Ovary (tissue), 10 donors: ENCODE measurements at regions of chr2 and their contacts with region 1.

Region 1: GRCh38 chr2:6917071-6917760 is at the start of gene RNF144A:
- DNase-seq: peak; percentile 62 to 85 (median 75)
- H3K4me3 ChIP-seq: peak within 1 kb of the TSS; percentile 55
- H3K27ac ChIP-seq: peak within 1 kb of the TSS; percentile 16 to 61
- H3K4me1 ChIP-seq: peaks cover 14% of the 10 kb centered on the region
- H3K27me3 ChIP-seq: no peaks in the 10 kb centered on the region
- CTCF ChIP-seq: peak in 2 of 3 donors; percentile 54
- EP300 ChIP-seq: no peak
- POLR2A ChIP-seq: peak; percentile 25
- total RNA-seq, gene RNF144A: 19.1 to 47.7 (median 25.3) TPM

Region 2: DNA sequence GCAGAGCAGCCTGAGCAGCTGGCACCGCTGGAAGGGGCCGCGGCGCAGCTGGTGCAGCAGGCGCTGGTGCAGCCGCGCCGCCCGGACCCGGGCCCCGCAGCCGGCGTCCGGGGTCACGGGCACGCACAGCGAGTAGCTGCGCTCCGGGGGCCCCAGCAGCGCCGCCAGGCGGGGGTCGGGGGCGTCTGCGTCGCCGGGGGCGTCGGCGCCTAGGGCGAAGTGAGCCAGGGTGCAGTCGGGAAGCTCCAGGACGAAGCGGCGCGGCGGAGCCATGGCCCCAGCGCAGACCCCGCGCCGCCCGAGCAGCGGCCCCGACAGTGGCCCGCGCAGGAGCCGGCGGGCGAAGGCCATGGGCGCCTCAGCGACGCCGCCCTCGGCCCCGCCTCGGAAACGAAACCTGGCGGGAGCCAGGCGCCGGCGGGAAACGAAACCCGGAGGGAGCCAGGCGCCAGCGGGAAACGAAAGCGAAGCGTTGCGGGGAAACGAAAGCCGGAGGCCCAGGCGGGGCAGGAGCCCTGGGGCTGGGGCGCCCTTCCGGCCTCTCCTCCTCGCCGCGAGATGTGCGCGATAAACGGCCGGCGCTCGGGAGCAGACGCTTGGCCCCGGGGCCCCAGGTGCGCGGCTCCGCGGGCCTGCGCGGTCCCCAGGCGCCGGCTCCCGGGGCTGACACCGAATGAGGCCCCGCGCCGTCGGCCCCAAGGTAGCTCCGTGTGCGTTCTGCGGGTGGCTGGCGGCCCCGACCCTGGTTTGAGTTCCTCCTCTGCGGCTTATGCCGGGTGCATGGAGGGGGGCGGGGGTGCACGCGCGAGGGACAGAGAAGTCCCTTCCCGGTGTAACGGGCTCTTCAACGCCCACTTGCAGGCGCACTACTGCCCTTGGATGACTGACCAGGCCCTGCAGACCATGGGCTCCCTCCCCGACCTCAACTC is 51.6 kb before region 1 on chr2 and contains the start of gene CMPK2:
- intact Hi-C with region 1: no loop called
- DNase-seq: peak; percentile 46 to 74 (median 66)
- H3K4me3 ChIP-seq: peak within 1 kb of the TSS; percentile 72
- H3K27ac ChIP-seq: peak within 1 kb of the TSS; percentile 80 to 86
- H3K4me1 ChIP-seq: no peaks in the 10 kb centered on the region
- H3K27me3 ChIP-seq: no peaks in the 10 kb centered on the region
- CTCF ChIP-seq: peak in 2 of 3 donors; percentile 19 to 23
- EP300 ChIP-seq: no peak
- POLR2A ChIP-seq: no peak
- total RNA-seq, gene CMPK2: 2.7 to 7.1 (median 4.2) TPM

Region 3: DNA sequence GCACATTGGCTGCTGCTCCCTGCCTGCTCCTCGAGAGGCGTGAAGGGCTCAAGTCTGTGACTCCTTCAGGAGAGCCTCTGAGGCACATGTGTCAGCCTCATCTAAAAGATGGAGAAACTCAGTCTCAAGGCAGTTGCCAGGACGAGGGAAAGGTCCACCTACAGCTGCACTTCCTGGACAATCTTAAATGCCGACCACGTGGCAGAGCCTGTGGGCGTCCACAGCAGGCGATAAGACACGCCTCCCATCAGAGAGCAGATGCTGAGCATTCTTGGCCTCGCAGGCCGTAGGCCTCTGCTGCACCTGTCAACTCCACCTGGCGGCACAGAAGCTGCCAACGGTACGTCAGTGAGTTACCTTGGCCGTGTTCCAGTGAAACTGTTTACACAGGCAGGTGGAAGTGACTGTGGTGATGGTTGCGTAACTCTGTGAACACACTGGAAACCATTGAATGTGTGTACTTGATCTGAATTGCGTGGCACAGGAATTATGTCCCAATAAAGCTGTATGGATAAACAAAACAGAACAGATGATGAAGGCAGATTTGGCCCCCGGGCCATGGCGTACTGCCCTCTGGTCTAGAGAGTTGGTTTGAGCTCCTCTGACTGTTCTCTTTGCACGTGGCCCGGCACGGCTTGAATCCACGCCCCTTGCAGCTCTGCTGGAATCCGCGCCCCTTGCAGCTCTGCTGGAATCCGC is 114.5 kb after region 1 on chr2:
- intact Hi-C with region 1: loop called in 3 of 4 experiments (anchors 5 to 10 kb)
- DNase-seq: no peak
- H3K4me3 ChIP-seq: no peak overlapping the region
- H3K27ac ChIP-seq: no peak overlapping the region
- H3K4me1 ChIP-seq: no peaks in the 10 kb centered on the region
- H3K27me3 ChIP-seq: no peaks in the 10 kb centered on the region
- CTCF ChIP-seq: no peak
- EP300 ChIP-seq: no peak
- POLR2A ChIP-seq: no peak

Region 4: GRCh38 chr2:7037340-7038333 is 120.4 kb after region 1 on chr2:
- intact Hi-C with region 1: loop called in 3 of 4 experiments (anchors 5 to 10 kb)
- DNase-seq: peak in 4 of 5 donors; percentile 55 to 70 (median 64)
- H3K4me3 ChIP-seq: no peak overlapping the region
- H3K27ac ChIP-seq: no peak overlapping the region
- H3K4me1 ChIP-seq: no peaks in the 10 kb centered on the region
- H3K27me3 ChIP-seq: no peaks in the 10 kb centered on the region
- CTCF ChIP-seq: peak in 2 of 3 donors; percentile 17 to 48
- EP300 ChIP-seq: no peak
- POLR2A ChIP-seq: no peak

Region 5: DNA sequence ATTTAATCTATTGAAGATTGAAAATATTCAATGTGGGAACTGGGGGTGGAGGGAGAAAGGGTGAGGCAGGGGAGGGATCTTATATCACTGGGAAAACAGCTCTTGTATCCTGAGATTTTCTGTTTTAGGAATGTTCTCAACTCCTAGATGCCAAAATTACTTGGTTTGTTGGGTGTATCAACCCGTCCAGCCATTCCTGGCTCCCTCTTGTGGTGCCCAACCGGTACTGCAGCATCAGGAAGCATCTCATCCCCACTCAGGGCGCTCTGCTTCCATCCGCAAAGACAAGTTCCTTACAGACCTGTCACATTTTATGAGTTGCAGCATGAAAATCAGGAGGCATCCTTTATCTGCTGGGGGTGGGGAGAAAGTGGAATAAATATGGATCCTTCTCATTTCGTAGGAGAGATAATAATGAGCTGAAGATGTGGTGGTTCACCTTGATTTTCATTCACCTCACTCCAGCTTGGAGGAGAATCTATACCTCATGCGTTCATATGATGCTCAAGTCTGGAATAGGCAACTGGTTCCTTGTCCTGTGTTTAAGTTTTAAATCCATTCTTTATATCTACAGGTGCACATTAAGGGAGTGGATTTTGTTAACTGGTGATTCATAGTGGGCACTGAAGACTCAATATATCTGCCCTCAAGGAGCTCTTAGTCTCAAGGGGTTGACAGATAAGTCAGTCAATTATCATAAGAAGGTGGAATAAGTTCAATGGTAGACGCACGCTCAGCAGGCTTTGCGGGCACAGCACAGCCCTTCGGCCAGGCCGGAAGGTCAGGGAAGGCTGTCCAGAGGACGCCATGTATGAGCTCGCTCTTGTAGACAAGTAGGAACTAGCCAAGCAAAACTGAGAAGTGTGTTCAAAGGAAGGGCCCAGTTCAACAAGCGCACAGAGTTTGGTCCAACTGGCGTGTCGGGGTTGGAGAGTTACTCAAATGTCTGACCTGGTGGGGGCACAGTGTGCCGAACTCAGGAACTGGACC is 127.3 kb after region 1 on chr2:
- intact Hi-C with region 1: loop called in 2 of 4 experiments (anchors 5 to 10 kb)
- DNase-seq: peak; percentile 49 to 81 (median 69)
- H3K4me3 ChIP-seq: no peak overlapping the region
- H3K27ac ChIP-seq: no peak overlapping the region
- H3K4me1 ChIP-seq: no peaks in the 10 kb centered on the region
- H3K27me3 ChIP-seq: no peaks in the 10 kb centered on the region
- CTCF ChIP-seq: peak; percentile 61 to 79 (median 71)
- EP300 ChIP-seq: no peak
- POLR2A ChIP-seq: no peak